ENCODE measurements at regions of chr10 and their contacts with region 1.

Region 1: DNA sequence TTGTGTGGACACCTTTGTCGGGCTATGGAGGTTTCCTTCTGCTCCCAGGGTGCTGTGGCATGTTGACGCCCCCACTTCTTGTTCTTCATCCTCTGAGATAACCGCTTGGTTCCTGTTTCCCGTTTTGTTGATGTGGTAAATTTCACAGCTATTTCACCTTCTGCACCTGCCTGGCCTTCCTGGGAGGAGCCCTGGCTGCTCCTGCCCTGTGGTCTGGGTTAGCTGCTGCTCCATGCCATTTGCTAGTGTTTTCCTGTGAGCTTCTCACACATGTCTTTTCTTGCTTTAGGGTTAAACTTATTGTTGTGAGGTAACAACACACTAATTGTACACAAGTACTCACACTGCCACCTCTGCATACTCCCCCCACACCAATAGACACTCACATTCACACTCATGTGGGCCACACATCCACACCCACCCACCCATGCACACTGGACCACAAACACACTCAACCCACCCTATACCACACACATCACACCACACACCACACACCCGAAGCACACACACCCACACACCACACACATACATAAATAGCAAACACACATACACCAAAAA is 46.5 kb upstream of the MSMB start:
- DNase-seq: peak in 8 of 10 donors; percentile 37 to 77 (median 63)
- ATAC-seq: peak; percentile 53 to 54
- H3K4me3 Mint-ChIP-seq: no peak overlapping the region
- H3K27ac Mint-ChIP-seq: no peak overlapping the region
- H3K4me1 Mint-ChIP-seq: peaks cover 0 to 31% (median 5%) of the 10 kb centered on the region in 4 donors
- H3K27me3 Mint-ChIP-seq: no peaks in the 10 kb centered on the region

Region 2: DNA sequence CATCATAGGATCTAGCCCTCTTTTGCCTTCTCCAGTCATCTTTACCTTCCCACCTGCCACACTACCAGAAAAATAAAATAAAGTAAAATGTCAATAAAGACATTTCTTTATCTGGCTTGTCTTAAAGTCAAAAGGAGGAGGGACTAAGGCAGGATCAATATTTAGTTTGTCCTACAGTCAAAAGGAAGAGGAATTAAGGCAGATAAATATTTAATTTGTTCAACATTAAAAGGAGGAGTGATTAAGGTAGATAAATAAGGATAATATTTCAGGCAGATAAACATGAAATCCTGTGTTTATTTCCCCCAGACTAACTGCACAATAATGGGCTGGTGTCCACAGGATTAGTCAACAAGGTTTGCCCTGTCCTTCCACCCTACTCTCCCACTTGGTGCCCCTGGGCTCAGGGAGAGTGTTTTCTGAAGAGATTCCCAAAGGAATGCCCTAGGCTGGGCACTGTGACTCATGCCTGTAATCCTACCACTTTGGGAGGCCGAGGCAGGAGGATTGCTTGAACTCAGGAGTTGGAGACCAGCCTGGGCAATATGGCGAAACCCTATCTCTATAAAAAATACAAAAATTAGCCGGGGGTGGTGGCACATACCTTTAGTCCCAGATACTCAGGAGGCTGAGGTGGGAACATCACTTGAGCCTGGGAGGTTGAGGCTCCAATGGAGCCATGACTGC is 28.2 kb before region 1 on chr10:
- POLR2A ChIA-PET with region 1: no interaction called
- DNase-seq: no peak
- ATAC-seq: no peak
- H3K4me3 Mint-ChIP-seq: no peak overlapping the region
- H3K27ac Mint-ChIP-seq: peak overlapping the region in 1 of 10 donors; percentile 51
- H3K4me1 Mint-ChIP-seq: peaks cover 0 to 5% (median 1%) of the 10 kb centered on the region in 4 donors
- H3K27me3 Mint-ChIP-seq: no peaks in the 10 kb centered on the region

Region 3: GRCh38 chr10:46077731-46078413 is 14.7 kb before region 1 on chr10:
- POLR2A ChIA-PET with region 1: interaction called, 10 read pairs
- DNase-seq: no peak
- ATAC-seq: no peak
- H3K4me3 Mint-ChIP-seq: peak overlapping the region in 4 of 10 donors; percentile 37 to 59 (median 55)
- H3K27ac Mint-ChIP-seq: peak overlapping the region; percentile 3 to 92 (median 70)
- H3K4me1 Mint-ChIP-seq: peaks cover 13 to 39% (median 24%) of the 10 kb centered on the region in 4 donors
- H3K27me3 Mint-ChIP-seq: no peaks in the 10 kb centered on the region

Region 4: GRCh38 chr10:46106410-46107255 is 14.0 kb after region 1 on chr10:
- POLR2A ChIA-PET with region 1: interaction called, 17 read pairs
- DNase-seq: peak in 9 of 10 donors; percentile 11 to 70 (median 48)
- ATAC-seq: peak; percentile 89 to 93
- H3K4me3 Mint-ChIP-seq: peak overlapping the region; percentile 77 to 95 (median 90)
- H3K27ac Mint-ChIP-seq: peak overlapping the region; percentile 26 to 92 (median 78)
- H3K4me1 Mint-ChIP-seq: peaks cover 13 to 18% (median 16%) of the 10 kb centered on the region in 4 donors
- H3K27me3 Mint-ChIP-seq: peaks cover 0 to 9% (median 0%) of the 10 kb centered on the region in 5 donors

Measured in naive thymus-derived CD8-positive, alpha-beta T cell (primary cell).